Pancreas (tissue), 10 donors: ENCODE measurements at regions of chr5 and their contacts with region 1.

Region 1: GRCh38 chr5:10793783-10794182 is 32.7 kb upstream of the DAP start:
- DNase-seq: no peak
- ATAC-seq: no peak
- H3K4me3 ChIP-seq: no peak overlapping the region
- H3K27ac ChIP-seq: no peak overlapping the region
- H3K4me1 ChIP-seq: no peaks in the 10 kb centered on the region
- H3K27me3 ChIP-seq: no peaks in the 10 kb centered on the region
- CTCF ChIP-seq: no peak

Region 2: DNA sequence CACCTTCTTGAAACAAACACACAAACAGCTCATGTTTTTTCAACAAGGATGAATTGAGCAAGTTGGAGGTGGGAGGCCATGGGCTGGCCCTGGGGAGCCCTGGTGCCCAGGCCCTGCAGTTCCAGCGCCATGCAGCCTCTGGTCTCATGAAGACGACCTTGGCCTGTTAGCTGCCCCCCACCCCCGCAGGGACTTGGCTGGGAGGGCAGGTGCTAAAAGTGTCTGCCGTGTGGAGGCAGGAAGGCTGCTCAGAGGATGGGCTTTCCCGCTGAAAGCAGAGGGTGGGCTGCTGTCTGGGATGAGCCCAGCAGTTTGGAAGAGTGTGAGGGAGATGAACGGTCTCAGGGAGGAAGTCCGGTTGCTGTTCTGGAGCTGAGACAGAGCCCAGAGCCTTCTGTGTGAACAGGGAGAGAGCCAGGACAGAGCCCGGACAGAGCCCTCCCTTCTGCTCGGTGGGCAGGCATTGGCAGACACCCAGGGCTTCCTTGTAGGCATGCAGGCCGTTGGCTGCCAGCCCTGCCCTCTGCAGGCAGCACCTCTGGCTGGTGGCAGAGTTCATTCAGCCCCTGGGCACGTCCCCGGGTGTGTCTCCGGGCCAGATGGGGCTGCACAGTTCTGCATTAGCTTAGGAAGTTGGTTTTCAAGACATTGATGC is 333.4 kb before region 1 on chr5:
- intact Hi-C with region 1: loop called in 1 of 3 experiments (anchors 5 kb)
- DNase-seq: peak in 5 of 6 donors; percentile 37 to 75 (median 58)
- ATAC-seq: peak; percentile 49 to 78 (median 66)
- H3K4me3 ChIP-seq: no peak overlapping the region
- H3K27ac ChIP-seq: no peak overlapping the region
- H3K4me1 ChIP-seq: no peaks in the 10 kb centered on the region
- H3K27me3 ChIP-seq: no peaks in the 10 kb centered on the region
- CTCF ChIP-seq: no peak

Region 3: GRCh38 chr5:10663489-10664179 is 130.1 kb before region 1 on chr5:
- intact Hi-C with region 1: no loop called
- DNase-seq: peak in 4 of 6 donors; percentile 53 to 63 (median 58)
- ATAC-seq: peak; percentile 72 to 92 (median 88)
- H3K4me3 ChIP-seq: no peak overlapping the region
- H3K27ac ChIP-seq: peak overlapping the region in 3 of 4 donors; percentile 46 to 72 (median 68)
- H3K4me1 ChIP-seq: peaks cover 0 to 6% (median 3%) of the 10 kb centered on the region in 3 donors
- H3K27me3 ChIP-seq: no peaks in the 10 kb centered on the region
- CTCF ChIP-seq: no peak